Activated naive CD4-positive, alpha-beta T cell treated with anti-CD3 and anti-CD28 coated beads for 36 hours (primary cell): ENCODE measurements at regions of chr13 and their contacts with region 1.

Region 1: DNA sequence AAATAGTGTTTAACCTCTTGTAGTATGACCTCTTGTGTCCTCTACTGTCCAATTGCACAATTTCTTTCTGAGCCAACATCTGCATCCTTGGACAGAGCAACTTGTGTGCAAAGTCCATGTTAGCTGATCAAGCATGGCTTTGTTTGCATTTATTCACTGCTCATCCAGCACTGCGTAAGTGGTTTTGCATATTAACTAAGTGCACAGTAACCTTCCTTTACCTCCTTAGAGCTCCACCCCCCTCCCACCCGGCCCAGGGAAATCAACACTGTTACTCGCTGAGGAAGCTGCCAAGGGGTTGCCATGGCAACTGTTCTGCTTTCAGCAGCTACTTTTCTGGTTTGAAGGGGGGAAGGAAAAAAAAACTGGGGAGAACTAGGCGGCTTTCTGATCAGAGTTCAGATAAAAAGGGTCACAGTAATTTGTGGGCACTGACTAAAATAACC is 153.5 kb upstream of the KLF12 start:
- DNase-seq: peak; percentile 88
- H3K4me3 Mint-ChIP-seq: peak overlapping the region; percentile 73
- H3K27ac Mint-ChIP-seq: peak overlapping the region; percentile 61
- H3K4me1 Mint-ChIP-seq: peaks cover 66% of the 10 kb centered on the region
- H3K27me3 Mint-ChIP-seq: no peaks in the 10 kb centered on the region

Region 2: DNA sequence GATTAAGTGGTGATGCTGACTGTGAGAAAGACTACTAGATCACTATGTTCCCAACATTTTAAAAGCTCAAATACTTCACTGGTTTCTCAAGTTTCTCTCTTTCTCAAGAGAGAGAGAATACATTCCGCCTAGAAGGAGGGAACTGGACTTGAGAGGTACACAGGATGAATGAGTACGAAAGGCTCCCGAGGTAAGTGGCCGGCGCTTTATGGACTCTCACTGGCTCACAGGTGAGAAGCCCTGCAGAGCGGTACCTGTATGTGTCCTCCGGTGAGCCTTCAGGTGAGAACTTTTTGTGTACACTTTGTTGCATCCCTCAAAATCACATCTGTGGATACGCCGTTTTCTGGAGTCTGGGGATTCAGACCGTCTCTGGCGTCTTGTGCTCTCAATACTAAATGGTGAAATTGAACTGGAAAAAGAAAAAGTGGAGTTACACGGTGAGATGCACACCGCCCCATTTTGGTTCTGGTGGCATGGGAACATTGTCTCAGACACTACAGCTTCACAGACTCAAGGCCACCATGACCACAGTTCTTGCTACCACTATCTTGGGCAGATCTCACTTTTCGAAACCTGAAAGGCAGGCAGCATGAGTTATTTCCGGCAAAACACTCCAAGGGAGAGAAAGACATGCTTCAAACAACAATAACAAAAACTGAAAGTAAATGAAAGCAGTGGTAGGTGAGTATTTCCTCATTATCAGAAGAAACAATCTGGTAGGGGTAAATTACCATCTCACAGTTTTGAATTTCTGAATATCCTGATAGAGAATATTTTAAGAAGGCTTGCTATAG is 572.4 kb before region 1 on chr13:
- CTCF ChIA-PET with region 1: no interaction called
- intact Hi-C with region 1: loop called (anchors 2 kb)
- DNase-seq: peak; percentile 76
- H3K4me3 Mint-ChIP-seq: peak overlapping the region; percentile 68
- H3K27ac Mint-ChIP-seq: peak overlapping the region; percentile 68
- H3K4me1 Mint-ChIP-seq: peaks cover 53% of the 10 kb centered on the region
- H3K27me3 Mint-ChIP-seq: no peaks in the 10 kb centered on the region

Region 3: DNA sequence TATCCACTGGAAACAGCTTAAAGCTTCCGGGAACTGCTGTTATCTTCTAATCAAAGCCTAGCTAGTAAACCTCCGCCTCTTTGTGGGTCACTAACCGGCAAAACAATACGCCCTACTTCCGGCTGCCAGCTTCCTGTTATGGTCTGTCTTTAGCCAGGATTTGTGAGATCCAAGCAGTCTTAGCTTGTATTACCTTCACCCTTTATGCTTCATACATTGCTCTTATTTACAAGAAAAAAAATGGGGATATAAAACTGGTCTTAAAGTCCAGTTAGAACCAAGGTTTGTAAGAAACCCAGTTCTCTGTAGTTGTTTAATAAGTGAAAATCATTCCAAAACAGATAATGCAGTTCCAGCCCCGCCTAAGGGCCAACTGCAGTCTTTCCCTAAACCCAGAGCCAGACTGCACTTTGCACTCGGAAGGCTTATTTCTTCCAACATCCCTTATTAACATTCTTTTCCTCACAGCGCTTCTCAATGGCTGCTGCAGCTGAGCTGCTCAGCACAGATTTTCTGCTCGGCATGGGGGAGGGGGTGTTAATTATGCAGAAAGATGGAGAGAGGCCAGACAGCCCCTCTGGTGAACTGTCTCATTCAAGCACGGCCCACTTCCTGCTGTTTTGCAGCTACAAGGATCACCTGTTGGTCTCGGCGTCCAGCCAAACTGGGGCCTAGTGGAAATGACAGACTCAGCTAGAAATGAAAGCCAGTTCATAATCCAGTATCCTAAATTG is 521.9 kb before region 1 on chr13:
- CTCF ChIA-PET with region 1: interaction called, 5 read pairs
- intact Hi-C with region 1: loop called (anchors 1 kb)
- DNase-seq: peak; percentile 95
- H3K4me3 Mint-ChIP-seq: peak overlapping the region; percentile 70
- H3K27ac Mint-ChIP-seq: peak overlapping the region; percentile 92
- H3K4me1 Mint-ChIP-seq: peaks cover 64% of the 10 kb centered on the region
- H3K27me3 Mint-ChIP-seq: no peaks in the 10 kb centered on the region

Region 4: DNA sequence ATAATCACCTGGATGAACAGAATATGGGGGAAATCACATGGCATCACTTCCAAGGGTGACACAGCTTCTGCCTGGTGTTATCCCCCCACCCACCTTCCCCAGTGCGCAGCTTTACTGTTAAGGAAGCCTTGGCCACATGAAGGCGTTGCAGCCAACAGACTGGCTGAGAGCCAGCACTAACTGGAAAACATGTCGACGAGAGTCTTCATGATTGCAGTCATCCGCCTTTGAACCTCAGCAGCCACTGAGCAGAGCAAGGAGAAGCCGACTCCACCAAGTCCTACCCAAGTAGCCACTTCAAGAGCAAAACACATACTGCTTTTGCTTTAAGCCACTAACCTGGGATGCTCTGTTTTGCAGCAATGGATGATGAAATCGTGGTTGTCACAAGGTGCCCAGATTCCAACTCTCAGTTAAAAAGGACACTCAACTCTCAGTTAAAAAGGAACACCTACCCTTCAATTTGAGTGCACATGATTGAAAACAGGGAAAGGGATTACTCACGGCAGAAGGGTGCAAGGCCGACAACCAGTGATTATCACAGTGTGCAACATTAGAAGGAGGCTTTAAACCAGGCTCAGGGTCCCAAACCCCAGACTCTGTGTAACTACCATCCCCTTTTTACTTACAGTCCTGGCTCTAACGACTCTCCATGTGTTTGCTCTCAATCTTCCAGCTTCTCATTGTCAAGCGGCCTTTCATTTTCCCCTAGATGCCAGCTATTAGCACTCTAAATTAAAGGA is 302.6 kb before region 1 on chr13:
- CTCF ChIA-PET with region 1: interaction called, 10 read pairs
- intact Hi-C with region 1: loop called (anchors 1 kb)
- DNase-seq: peak; percentile 95
- H3K4me3 Mint-ChIP-seq: peak overlapping the region; percentile 73
- H3K27ac Mint-ChIP-seq: peak overlapping the region; percentile 96
- H3K4me1 Mint-ChIP-seq: peaks cover 39% of the 10 kb centered on the region
- H3K27me3 Mint-ChIP-seq: no peaks in the 10 kb centered on the region

Region 5: GRCh38 chr13:74062933-74063332 is 224.8 kb before region 1 on chr13:
- CTCF ChIA-PET with region 1: interaction called, 7 read pairs
- intact Hi-C with region 1: loop called (anchors 1 kb)
- DNase-seq: peak; percentile 62
- H3K4me3 Mint-ChIP-seq: peak overlapping the region; percentile 73
- H3K27ac Mint-ChIP-seq: peak overlapping the region; percentile 86
- H3K4me1 Mint-ChIP-seq: peaks cover 78% of the 10 kb centered on the region
- H3K27me3 Mint-ChIP-seq: no peaks in the 10 kb centered on the region

Region 6: DNA sequence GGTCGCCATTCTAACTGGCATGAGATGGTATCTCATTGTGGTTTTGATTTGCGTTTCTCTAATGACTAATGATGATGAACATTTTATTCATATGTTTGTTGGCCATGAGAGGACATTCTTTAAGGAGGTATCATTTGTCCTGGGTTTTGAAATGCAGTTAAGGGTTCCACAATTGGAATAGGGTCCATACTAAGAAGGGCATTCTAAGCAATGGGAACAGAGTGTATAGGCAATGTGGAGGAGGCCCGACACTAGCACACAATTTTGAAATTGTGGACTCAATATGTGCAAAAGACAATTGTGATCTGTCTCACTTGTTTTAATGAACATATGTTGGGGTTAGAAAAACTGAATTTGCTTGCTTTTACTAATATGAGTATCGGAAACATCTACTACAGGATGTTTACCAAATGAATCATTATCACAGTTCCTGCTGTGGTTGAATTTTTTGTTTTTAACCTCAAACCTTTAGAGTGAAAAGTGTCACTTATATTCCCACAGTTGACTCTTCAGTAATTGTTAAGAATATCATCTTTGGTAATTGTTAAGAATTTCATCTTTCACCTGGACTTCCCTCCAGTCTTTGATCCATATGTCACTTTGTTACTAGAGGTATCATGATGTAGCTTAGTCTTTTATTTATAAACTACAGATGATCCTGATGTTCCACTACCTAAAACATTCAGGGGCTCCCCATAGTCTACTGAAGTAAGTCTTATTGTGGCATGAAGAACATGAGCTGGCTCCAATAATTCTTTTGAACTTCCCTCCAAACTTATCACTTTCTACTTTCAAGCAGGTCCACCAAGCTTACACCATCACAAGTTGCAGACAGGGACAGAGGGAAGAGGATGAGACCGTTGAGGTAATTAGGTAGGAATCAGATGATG is 43.9 kb before region 1 on chr13:
- CTCF ChIA-PET with region 1: interaction called, 8 read pairs
- intact Hi-C with region 1: loop called (anchors 1 kb)
- DNase-seq: no peak
- H3K4me3 Mint-ChIP-seq: peak overlapping the region; percentile 48
- H3K27ac Mint-ChIP-seq: peak overlapping the region; percentile 81
- H3K4me1 Mint-ChIP-seq: peaks cover 67% of the 10 kb centered on the region
- H3K27me3 Mint-ChIP-seq: no peaks in the 10 kb centered on the region

Region 7: DNA sequence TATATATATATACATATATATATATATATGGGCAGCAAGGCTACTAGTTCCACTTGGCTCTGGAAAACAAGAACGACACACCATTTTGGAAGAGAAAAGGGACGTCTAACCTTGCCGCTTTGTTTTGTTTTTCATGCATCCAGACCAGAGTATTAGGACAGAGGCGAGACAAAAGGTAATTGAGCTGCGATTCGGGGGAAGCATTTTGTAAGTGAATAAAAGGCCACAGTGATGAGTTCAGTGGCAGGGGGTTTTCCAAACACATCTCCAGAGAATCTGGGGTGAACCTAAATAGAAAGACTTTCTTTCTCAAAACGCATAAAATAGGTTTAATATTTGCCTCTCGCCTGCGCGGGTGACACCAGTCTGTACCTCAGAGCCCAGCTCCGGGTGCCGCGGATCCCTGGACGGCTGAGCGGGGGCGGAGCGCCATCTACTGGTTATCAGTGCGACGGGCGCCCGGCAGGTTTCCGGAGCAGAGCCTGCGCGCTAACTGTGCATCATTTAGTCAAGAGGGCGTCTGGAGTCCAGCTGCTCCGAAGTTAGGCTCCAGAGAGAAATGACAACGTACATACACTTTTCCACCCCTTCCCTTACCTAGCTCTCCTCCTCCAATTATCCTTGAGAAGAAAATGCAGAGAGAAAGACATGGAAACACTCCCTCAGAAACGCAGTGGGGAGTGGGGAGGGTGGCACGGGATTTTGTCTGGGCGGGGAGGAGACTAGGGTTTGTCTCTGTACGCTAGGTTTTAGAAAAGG is 931.9 kb after region 1 on chr13:
- CTCF ChIA-PET with region 1: interaction called, 8 read pairs
- intact Hi-C with region 1: loop called (anchors 2 kb)
- DNase-seq: peak; percentile 89
- H3K4me3 Mint-ChIP-seq: peak overlapping the region; percentile 17
- H3K27ac Mint-ChIP-seq: no peak overlapping the region
- H3K4me1 Mint-ChIP-seq: peaks cover 3% of the 10 kb centered on the region
- H3K27me3 Mint-ChIP-seq: peaks cover 31% of the 10 kb centered on the region